OCI-LY7 (cell line): ENCODE measurements at regions of chr2 and their contacts with region 1.

Region 1: DNA sequence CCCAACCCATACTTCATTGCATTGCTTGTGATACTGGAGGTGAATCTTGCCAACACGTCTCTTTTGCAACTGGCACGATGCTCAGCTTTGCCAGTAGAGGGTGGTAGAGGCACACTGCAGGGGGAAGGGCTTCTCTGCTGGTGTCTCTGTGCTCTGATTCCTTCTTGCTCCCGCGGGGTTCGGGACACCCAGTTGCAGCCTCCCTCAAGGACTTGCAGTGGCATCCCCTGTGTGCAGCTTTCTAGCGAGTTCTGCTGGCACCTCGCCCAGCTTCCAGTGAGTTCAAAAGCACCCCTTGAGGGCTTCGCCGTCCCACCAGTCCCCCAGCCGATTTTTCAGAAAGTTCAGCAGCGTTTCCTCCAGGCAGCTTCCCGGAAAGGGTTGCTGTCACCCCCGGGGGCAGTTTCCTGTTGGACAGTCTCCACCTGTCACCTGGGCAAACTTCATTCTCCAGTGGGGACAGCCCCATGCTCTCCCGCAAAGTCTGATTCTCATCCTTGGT is 35.3 kb upstream of the EN1 start:
- DNase-seq: peak; percentile 82
- H3K4me3 ChIP-seq: peak overlapping the region; percentile 67
- H3K27ac ChIP-seq: no peak overlapping the region
- H3K4me1 ChIP-seq: peaks cover 9% of the 10 kb centered on the region
- CTCF ChIP-seq: peak; percentile 95

Region 2: GRCh38 chr2:118936936-118937335 is 54.2 kb after region 1 on chr2:
- CTCF ChIA-PET with region 1: no interaction called
- POLR2A ChIA-PET with region 1: no interaction called
- intact Hi-C with region 1: no loop called
- DNase-seq: no peak
- H3K4me3 ChIP-seq: no peak overlapping the region
- H3K27ac ChIP-seq: no peak overlapping the region
- H3K4me1 ChIP-seq: no peaks in the 10 kb centered on the region
- CTCF ChIP-seq: no peak

Region 3: GRCh38 chr2:119049968-119050704 is 167.4 kb after region 1 on chr2:
- CTCF ChIA-PET with region 1: no interaction called
- POLR2A ChIA-PET with region 1: no interaction called
- intact Hi-C with region 1: loop called (anchors 10 kb)
- DNase-seq: peak; percentile 24
- H3K4me3 ChIP-seq: no peak overlapping the region
- H3K27ac ChIP-seq: no peak overlapping the region
- H3K4me1 ChIP-seq: no peaks in the 10 kb centered on the region
- CTCF ChIP-seq: peak; percentile 65

Region 4: GRCh38 chr2:119174216-119175037 is 291.7 kb after region 1 on chr2:
- CTCF ChIA-PET with region 1: interaction called, 3 read pairs
- POLR2A ChIA-PET with region 1: no interaction called
- intact Hi-C with region 1: loop called (anchors 1 kb)
- DNase-seq: peak; percentile 54
- H3K4me3 ChIP-seq: no peak overlapping the region
- H3K27ac ChIP-seq: no peak overlapping the region
- H3K4me1 ChIP-seq: no peaks in the 10 kb centered on the region
- CTCF ChIP-seq: peak; percentile 91

Region 5: DNA sequence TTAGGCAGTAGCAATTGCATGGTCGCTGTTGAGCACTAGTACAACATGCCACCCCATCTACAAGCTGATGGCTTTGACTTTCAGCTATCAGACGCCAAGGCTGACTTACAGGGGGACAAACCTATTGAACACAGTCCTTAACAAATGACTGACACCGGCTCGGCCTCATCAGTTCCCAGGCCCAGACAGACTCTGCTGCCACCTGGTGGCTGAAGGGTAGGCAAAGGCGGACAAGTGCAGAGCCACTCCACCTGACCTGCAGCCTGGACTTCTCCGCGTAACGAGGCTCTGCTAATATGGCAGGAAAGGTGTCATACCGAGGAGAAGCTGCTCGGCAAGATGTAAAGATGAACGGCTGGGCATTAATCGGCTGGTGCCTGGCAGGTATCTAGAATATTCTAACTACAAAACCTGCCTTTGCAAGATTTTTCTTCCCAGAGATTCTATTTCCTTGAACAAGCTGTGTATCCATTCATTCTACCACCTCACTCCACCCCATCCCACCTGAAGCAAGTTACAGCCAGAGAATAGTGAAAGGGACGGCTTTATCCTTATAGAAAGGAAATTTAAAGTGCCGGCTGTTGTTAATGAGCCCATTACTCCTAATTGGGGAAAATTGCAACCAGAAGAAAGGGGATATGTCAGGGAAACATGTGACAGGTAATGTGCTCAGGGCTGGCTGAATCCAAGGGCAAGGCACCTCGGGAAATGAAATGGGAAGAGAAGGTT is 408.3 kb after region 1 on chr2:
- CTCF ChIA-PET with region 1: no interaction called
- POLR2A ChIA-PET with region 1: interaction called, 4 read pairs
- intact Hi-C with region 1: loop called (anchors 1 kb)
- DNase-seq: peak; percentile 70
- H3K4me3 ChIP-seq: no peak overlapping the region
- H3K27ac ChIP-seq: no peak overlapping the region
- H3K4me1 ChIP-seq: no peaks in the 10 kb centered on the region
- CTCF ChIP-seq: peak; percentile 82

Region 6: DNA sequence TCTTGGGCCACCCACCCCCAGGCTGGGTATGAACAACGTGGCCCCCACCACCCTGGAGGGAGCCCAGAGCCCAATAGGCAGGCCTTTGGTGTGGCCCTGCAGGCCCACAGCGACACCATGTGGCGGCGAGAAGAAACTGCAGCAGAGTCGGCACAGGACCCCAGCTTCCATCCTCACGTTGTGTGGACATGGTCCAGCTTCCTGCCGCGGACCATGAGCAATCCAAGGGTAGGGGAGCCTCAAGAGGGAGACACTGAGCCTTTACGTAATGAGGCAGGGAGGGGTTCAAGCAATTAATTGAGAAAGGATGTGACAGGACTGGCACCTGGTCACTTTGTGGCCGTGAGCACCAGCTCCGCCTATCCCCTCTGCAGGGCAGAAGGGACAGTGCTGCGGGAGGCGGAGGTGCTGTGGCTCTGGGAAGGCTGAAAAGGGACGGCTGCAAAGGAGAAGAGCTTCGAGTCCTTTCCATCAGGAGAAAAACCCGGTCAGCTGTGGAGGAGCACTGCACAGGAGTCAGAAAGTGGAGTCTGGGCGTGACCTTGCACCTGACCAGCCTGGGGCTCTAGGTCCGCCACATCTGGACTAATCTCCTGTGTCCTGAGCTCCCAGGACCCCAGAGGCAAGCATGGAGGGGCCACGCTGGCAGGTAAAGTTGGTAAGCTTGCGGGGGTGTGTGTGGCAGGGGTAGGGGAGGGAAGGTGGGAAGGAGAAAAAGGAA is 593.7 kb after region 1 on chr2:
- CTCF ChIA-PET with region 1: no interaction called
- POLR2A ChIA-PET with region 1: no interaction called
- intact Hi-C with region 1: loop called (anchors 2 kb)
- DNase-seq: peak; percentile 68
- H3K4me3 ChIP-seq: no peak overlapping the region
- H3K27ac ChIP-seq: no peak overlapping the region
- H3K4me1 ChIP-seq: peaks cover 3% of the 10 kb centered on the region
- CTCF ChIP-seq: peak; percentile 98